Transverse colon (tissue), 4 donors: ENCODE measurements at regions of chr21 and their contacts with region 1.

Region 1: GRCh38 chr21:40481764-40482163 is 365.2 kb downstream of the DSCAM start:
- DNase-seq: no peak
- H3K4me3 ChIP-seq: no peak overlapping the region
- H3K27ac ChIP-seq: no peak overlapping the region
- H3K4me1 ChIP-seq: no peaks in the 10 kb centered on the region
- H3K27me3 ChIP-seq: no peaks in the 10 kb centered on the region
- CTCF ChIP-seq: no peak
- EP300 ChIP-seq: no peak
- POLR2A ChIP-seq: no peak

Region 2: GRCh38 chr21:39845571-39846130 is 636.1 kb before region 1 on chr21:
- in situ Hi-C with region 1: no loop called
- intact Hi-C with region 1: no loop called
- DNase-seq: no peak
- H3K4me3 ChIP-seq: no peak overlapping the region
- H3K27ac ChIP-seq: no peak overlapping the region
- H3K4me1 ChIP-seq: no peaks in the 10 kb centered on the region
- H3K27me3 ChIP-seq: no peaks in the 10 kb centered on the region
- CTCF ChIP-seq: no peak
- EP300 ChIP-seq: no peak
- POLR2A ChIP-seq: no peak

Region 3: DNA sequence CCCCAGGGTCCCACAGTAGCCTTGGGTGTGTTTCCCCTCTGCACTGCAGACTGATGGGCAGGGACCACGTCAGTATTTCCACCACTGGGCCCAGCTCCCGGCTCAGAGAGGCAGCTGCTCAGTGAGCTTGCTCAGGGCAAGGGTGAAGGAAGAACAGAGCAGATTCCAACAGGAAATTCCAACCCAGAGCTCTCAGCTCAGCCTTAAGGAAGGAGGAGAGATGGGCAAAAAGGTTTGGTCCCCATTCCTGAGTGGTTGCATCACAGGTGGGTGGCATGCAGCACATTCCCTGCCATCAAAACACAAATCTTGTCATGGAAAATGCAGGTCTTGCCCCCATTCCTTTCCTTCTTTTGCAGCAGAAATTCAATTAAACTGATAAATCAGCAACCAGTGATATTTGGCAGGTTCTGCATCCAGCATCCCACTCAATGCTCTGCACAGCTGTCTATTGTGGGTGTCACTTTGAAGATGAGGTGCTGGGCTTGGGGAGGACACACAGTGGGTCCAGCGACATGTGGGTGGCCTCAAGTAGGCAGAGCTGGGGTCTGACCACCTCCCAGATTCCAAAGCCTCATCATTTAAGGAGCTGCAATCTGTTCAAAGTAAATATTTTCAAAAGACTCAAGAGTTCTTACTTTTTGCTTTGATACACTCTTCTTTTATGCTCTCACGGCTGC is 49.8 kb after region 1 on chr21:
- in situ Hi-C with region 1: no loop called
- intact Hi-C with region 1: loop called (anchors 1 kb)
- DNase-seq: no peak
- H3K4me3 ChIP-seq: no peak overlapping the region
- H3K27ac ChIP-seq: no peak overlapping the region
- H3K4me1 ChIP-seq: no peaks in the 10 kb centered on the region
- H3K27me3 ChIP-seq: no peaks in the 10 kb centered on the region
- CTCF ChIP-seq: no peak
- EP300 ChIP-seq: no peak
- POLR2A ChIP-seq: no peak